ENCODE measurements at regions of chr3 and their contacts with region 1.

Region 1: DNA sequence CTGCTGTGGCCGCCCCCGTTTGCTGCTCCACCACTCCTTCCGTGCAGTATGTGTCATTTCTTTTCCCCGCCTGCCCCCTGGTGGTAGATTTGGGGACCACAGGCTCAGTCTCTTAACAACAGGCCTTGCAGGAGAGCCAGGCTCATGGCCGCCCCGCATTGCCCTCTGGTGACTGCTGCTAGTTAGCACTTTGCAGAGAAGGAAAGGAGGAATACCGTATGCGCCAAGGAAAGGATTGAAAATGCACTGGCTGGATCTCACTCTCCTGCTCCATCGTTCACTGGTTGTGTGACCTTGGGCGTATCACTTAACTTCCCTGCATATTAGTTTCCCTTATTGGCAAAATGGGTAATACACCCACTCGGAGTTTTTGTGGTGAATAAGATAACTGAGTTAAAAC is 39.3 kb upstream of the PXYLP1 start:
- DNase-seq: peak; percentile 87
- ATAC-seq: peak; percentile 99
- H3K4me3 ChIP-seq: no peak overlapping the region
- H3K27ac ChIP-seq: no peak overlapping the region
- H3K4me1 ChIP-seq: no peaks in the 10 kb centered on the region
- H3K27me3 ChIP-seq: peaks cover 0 to 17% of the 10 kb centered on the region in 2 experiments; a peak in 2 of 5 replicates
- CTCF ChIP-seq: peak; percentile 99
- EP300 ChIP-seq: no peak
- POLR2A ChIP-seq: no peak
- RAD21 ChIP-seq: peak; percentile 95

Region 2: GRCh38 chr3:140898340-140899180 is 293.8 kb before region 1 on chr3:
- CTCF ChIA-PET with region 1: interaction called, 20 read pairs
- POLR2A ChIA-PET with region 1: no interaction called
- in situ Hi-C with region 1: no loop called
- intact Hi-C with region 1: loop called (anchors 1 kb)
- DNase-seq: peak; percentile 58
- ATAC-seq: peak; percentile 77
- H3K4me3 ChIP-seq: no peak overlapping the region
- H3K27ac ChIP-seq: no peak overlapping the region
- H3K4me1 ChIP-seq: no peaks in the 10 kb centered on the region
- H3K27me3 ChIP-seq: no peaks in the 10 kb centered on the region; a peak in 1 of 5 replicates
- CTCF ChIP-seq: peak; percentile 76
- EP300 ChIP-seq: no peak
- POLR2A ChIP-seq: no peak
- RAD21 ChIP-seq: 0 out of 2 replicates have a peak, but pooled peaks have one; percentile 13

Region 3: GRCh38 chr3:140910860-140911259 is 281.5 kb before region 1 on chr3:
- CTCF ChIA-PET with region 1: no interaction called
- POLR2A ChIA-PET with region 1: no interaction called
- in situ Hi-C with region 1: loop called (anchors 10 kb)
- intact Hi-C with region 1: no loop called
- DNase-seq: no peak
- ATAC-seq: peak; percentile 59
- H3K4me3 ChIP-seq: no peak overlapping the region
- H3K27ac ChIP-seq: no peak overlapping the region
- H3K4me1 ChIP-seq: peaks cover 25% of the 10 kb centered on the region
- H3K27me3 ChIP-seq: 0 out of 5 replicates have a peak, but pooled peaks cover 0 to 9% of the 10 kb centered on the region in 2 experiments
- CTCF ChIP-seq: peak; percentile 16
- EP300 ChIP-seq: no peak
- POLR2A ChIP-seq: no peak
- RAD21 ChIP-seq: no peak

Region 4: DNA sequence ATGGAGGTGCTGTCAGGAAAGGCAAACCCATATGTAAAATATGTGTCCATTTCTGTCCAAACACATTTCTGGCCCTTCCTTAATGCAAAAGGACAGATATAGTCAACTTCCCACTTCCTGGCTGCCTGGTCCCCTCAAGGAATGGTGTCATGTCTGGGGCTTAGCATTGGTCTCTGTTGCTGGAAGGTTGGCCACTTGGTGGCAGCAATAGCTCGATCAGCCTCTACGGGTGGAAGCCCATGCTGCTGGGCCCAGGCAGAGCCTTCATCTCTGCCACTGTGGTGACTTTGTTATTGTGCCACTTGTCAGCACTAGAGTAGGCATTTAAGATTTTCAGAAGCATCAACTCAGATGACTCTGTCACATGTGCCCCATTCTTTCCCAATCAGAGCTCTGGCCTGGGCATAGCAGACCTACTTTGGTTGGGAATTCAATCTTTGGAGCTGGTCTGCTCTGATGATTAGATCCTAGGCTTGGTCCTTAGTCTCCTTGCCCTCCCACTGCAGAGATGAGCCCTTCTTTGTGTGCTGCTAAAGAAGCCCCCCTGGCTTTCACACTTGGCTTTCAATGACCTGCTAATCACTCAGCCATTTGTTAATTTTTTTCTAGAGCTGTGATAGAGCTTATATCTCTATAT is 192.2 kb before region 1 on chr3:
- CTCF ChIA-PET with region 1: interaction called, 26 read pairs
- POLR2A ChIA-PET with region 1: no interaction called
- in situ Hi-C with region 1: loop called (anchors 5 kb)
- intact Hi-C with region 1: loop called (anchors 1 kb)
- DNase-seq: peak; percentile 43
- ATAC-seq: peak; percentile 100
- H3K4me3 ChIP-seq: no peak overlapping the region
- H3K27ac ChIP-seq: no peak overlapping the region
- H3K4me1 ChIP-seq: no peaks in the 10 kb centered on the region
- H3K27me3 ChIP-seq: no peaks in the 10 kb centered on the region
- CTCF ChIP-seq: peak; percentile 87
- EP300 ChIP-seq: no peak
- POLR2A ChIP-seq: no peak
- RAD21 ChIP-seq: peak; percentile 65; the same call in 1 of the 2 replicates

Region 5: DNA sequence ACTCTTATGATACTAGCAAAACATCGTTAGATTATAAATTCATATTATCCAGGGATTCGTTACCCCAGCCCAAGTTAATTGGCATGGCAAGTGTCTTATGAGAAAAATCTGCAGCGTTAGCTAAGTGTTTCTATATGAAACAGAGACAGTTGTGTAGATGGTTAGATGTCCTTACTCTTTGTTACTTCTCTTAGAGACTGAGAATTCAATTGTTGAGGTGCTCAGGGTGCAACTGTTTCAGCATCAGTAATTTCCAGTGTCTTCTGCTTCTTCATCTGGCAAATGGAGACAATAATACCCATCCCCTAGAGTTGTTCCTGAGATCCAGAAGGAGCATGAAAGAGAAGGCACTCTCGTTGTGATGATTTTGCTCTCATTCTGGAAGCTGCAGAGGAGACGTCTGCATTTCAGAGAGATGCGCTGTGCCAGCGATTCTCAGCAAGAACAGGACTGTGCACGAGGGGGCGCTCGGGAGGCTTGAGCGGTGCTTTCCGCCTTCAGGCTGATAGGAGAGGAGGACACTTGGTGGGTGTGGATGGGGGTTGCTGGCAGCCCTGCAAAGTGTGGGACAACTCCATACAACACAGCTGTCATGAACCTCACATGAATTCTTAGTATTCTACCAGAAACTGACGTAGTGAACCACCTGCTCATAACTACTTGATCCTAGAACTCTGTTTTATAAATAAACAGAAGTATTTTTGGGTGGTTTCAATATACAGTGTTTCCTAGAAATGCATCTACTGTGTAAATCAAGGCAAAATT is 180.9 kb before region 1 on chr3:
- CTCF ChIA-PET with region 1: interaction called, 41 read pairs
- POLR2A ChIA-PET with region 1: no interaction called
- in situ Hi-C with region 1: no loop called
- intact Hi-C with region 1: loop called (anchors 1 kb)
- DNase-seq: peak; percentile 45
- ATAC-seq: peak; percentile 99
- H3K4me3 ChIP-seq: no peak overlapping the region
- H3K27ac ChIP-seq: no peak overlapping the region
- H3K4me1 ChIP-seq: no peaks in the 10 kb centered on the region
- H3K27me3 ChIP-seq: peaks cover 0 to 8% of the 10 kb centered on the region in 2 experiments; a peak in 2 of 5 replicates
- CTCF ChIP-seq: peak; percentile 90
- EP300 ChIP-seq: no peak
- POLR2A ChIP-seq: no peak
- RAD21 ChIP-seq: peak; percentile 57; the same call in 1 of the 2 replicates

Region 6: DNA sequence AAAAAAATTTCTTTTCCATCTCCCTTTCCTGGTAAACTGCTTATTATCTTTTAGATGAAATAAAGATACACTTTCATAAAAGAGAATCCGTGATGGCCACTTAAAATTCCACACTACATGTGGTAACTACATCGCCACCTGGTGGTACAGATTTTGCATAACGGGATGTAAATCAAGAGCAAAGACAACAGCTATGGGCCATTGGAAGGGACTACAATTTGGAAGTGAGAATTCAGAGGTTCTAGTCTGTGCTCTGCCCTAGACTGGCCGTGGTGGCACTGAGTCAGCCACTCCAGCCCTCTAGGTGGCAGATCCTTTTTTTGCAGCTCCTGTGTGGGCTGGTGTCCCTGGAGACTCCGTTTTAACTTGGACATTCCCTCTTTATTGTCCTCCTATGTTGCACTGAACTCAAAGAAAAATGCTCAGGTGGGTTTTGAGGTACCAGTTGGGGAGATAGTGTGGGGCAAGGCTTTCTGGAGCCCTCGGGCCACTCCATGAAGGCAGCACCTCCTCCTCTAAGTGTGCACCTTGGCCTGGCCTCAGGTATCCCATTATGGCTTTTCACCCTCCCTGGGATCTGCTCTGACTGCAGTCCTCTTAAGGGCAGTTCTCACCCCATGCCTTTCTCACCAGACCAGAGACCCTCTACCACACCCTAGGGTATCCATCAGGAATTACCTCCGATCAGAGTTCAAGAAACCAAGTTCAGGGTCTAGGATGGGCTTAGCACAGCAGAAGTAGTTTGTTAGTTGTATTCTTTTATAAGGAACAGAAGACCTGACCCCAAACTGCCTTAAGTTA is 86.3 kb before region 1 on chr3:
- CTCF ChIA-PET with region 1: interaction called, 6 read pairs
- POLR2A ChIA-PET with region 1: no interaction called
- in situ Hi-C with region 1: loop called (anchors 5 kb)
- intact Hi-C with region 1: loop called (anchors 2 kb)
- DNase-seq: peak; percentile 74
- ATAC-seq: peak; percentile 73
- H3K4me3 ChIP-seq: no peak overlapping the region
- H3K27ac ChIP-seq: no peak overlapping the region
- H3K4me1 ChIP-seq: 0 out of 2 replicates have a peak, but pooled peaks cover 8% of the 10 kb centered on the region
- H3K27me3 ChIP-seq: 0 out of 5 replicates have a peak, but pooled peaks cover 0 to 3% of the 10 kb centered on the region in 2 experiments
- CTCF ChIP-seq: peak; percentile 76
- EP300 ChIP-seq: no peak
- POLR2A ChIP-seq: no peak
- RAD21 ChIP-seq: 0 out of 2 replicates have a peak, but pooled peaks have one; percentile 34

Region 7: DNA sequence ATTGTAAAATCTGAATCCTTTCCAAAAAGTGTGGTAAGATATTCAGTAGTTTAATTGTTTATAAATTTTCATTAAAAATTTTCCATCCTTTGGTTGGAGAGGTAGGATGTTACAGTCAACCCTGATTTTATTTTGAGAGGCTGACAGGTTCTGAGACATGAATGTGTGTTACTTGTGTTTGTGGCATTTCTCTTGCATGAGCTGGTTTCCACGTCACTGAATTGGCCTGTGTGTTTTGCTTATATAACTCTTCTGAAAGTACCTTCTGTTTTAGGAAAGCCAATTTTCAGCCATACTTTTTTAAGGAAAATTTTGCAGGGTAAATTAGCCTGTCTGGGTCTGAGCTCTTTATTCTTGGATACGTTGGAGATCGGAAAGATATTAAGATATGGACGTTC is 70.0 kb after region 1 on chr3:
- CTCF ChIA-PET with region 1: no interaction called
- POLR2A ChIA-PET with region 1: no interaction called
- in situ Hi-C with region 1: no loop called
- intact Hi-C with region 1: no loop called
- DNase-seq: no peak
- ATAC-seq: no peak
- H3K4me3 ChIP-seq: no peak overlapping the region
- H3K27ac ChIP-seq: no peak overlapping the region
- H3K4me1 ChIP-seq: no peaks in the 10 kb centered on the region
- H3K27me3 ChIP-seq: no peaks in the 10 kb centered on the region
- CTCF ChIP-seq: no peak
- EP300 ChIP-seq: no peak
- POLR2A ChIP-seq: no peak
- RAD21 ChIP-seq: no peak

Measured in HepG2 (cell line).